H1 (cell line): ENCODE measurements at regions of chr6 and their contacts with region 1.

Region 1: DNA sequence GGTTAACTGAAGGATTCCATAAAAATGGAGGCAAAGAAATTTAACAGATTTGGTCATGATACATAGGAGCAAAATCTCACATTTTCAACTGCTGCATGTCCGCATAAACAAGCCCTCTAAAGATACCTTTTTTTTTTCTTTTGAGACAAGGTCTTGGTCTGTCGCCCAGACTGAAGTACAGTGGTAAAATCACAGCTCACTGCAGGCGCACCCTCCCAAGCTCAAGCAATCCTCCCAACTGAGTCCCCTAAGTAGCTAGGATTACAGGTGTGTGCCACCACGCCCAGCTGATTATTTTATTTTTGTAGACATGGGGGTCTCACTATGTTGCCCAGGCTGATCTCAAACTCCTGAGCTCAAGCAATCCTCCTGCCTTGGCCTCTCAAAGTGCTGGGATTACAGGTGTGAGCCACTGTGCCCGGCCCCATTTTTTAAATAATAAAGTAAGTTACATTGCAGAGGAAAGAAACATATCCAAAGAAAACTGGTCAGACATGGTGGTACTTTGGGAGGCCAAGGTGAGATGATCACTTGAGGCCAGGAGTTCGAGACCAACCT is 13.7 kb downstream of the MDN1 start:
- DNase-seq: no peak
- H3K4me3 ChIP-seq: no peak overlapping the region
- H3K27ac ChIP-seq: no peak overlapping the region
- H3K4me1 ChIP-seq: peaks cover 0 to 8% (median 3%) of the 10 kb centered on the region in 4 experiments; a peak in 3 of 7 replicates
- H3K27me3 ChIP-seq: no peaks in the 10 kb centered on the region
- CTCF ChIP-seq: no peak
- EP300 ChIP-seq: no peak
- POLR2A ChIP-seq: no peak
- RAD21 ChIP-seq: no peak

Region 2: GRCh38 chr6:89711801-89712200 is 94.1 kb before region 1 on chr6:
- CTCF ChIA-PET with region 1: no interaction called
- POLR2A ChIA-PET with region 1: no interaction called
- DNase-seq: no peak
- H3K4me3 ChIP-seq: no peak overlapping the region
- H3K27ac ChIP-seq: no peak overlapping the region
- H3K4me1 ChIP-seq: no peaks in the 10 kb centered on the region
- H3K27me3 ChIP-seq: no peaks in the 10 kb centered on the region
- CTCF ChIP-seq: no peak
- EP300 ChIP-seq: no peak
- POLR2A ChIP-seq: no peak
- RAD21 ChIP-seq: no peak

Region 3: GRCh38 chr6:89782222-89782621 is 23.7 kb before region 1 on chr6:
- CTCF ChIA-PET with region 1: no interaction called
- POLR2A ChIA-PET with region 1: no interaction called
- DNase-seq: no peak
- H3K4me3 ChIP-seq: no peak overlapping the region
- H3K27ac ChIP-seq: peak overlapping the region; percentile 45
- H3K4me1 ChIP-seq: no peaks in the 10 kb centered on the region
- H3K27me3 ChIP-seq: no peaks in the 10 kb centered on the region
- CTCF ChIP-seq: no peak
- EP300 ChIP-seq: no peak
- POLR2A ChIP-seq: no peak
- RAD21 ChIP-seq: no peak

Region 4: GRCh38 chr6:89819336-89820130 is 13.6 kb after region 1 on chr6 and contains the start of gene MDN1:
- CTCF ChIA-PET with region 1: interaction called, 8 read pairs
- POLR2A ChIA-PET with region 1: interaction called, 72 read pairs
- DNase-seq: peak; percentile 88 to 90
- H3K4me3 ChIP-seq: peak within 1 kb of the TSS; percentile 83 to 93 (median 91)
- H3K27ac ChIP-seq: peak within 1 kb of the TSS; percentile 93
- H3K4me1 ChIP-seq: peaks cover 4 to 18% (median 11%) of the 10 kb centered on the region in 4 experiments
- H3K27me3 ChIP-seq: no peaks in the 10 kb centered on the region
- CTCF ChIP-seq: no peak
- EP300 ChIP-seq: 0 out of 3 replicates have a peak, but pooled peaks of 1 of the 2 experiments have one; percentile 28
- POLR2A ChIP-seq: peak; percentile 82 to 89
- RAD21 ChIP-seq: no peak
- total RNA-seq, gene MDN1: 175 and 179 TPM in 2 replicates